ENCODE measurements at regions of chr12 and their contacts with region 1.

Region 1: GRCh38 chr12:49967042-49967776 is 5.5 kb downstream of the AQP5 start:
- DNase-seq: peak; percentile 92
- CTCF ChIP-seq: peak; percentile 99

Region 2: DNA sequence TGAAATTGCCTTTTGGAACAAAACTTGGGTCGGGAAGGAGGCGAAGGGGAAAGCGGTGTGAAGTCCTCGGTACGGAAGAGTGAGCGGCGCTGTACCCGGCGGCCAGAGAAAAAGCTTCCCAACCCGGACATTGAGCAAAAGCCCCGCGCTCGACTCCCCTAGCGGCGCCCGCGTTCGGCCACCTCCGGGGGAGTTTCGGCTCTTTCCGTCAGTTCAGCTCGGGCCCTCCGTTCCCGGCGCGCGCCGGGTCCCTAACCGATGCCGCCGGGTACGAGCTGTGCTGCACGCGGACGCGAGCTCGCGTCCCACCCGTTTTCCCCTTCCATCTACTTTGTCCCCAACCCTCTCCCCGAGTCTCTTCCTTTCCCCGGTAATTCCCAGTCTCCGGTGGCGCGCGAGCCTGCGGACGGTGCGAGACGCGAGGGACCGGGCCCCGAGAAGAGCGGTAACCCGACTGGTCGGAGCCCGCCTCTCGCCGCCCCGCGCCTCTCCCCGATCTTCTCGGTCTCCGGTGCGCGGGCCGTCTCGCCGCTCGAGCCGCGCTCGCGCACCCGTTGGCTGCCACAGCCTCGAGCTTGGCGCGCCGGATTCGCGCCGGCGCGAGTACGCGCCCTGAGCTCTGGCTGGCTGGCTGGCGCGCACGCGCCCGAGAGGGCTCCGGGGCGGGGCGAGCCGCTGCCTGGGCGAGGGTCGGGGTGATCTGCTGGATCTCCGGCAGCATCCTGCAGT is 600.4 kb before region 1 on chr12:
- in situ Hi-C with region 1: no loop called
- DNase-seq: peak; percentile 97
- CTCF ChIP-seq: peak; percentile 17

Region 3: GRCh38 chr12:50055831-50056638 is 88.8 kb after region 1 on chr12:
- in situ Hi-C with region 1: loop called (anchors 10 kb)
- DNase-seq: peak; percentile 89
- CTCF ChIP-seq: peak; percentile 96

Measured in GM13977 (cell line).